Posterior cingulate gyrus (tissue), 11 donors: ENCODE measurements at regions of chr17 and their contacts with region 1.

Region 1: GRCh38 chr17:22123536-22124281 is 431.4 kb downstream of the KCNJ18 start:
- DNase-seq: no peak

Region 2: DNA sequence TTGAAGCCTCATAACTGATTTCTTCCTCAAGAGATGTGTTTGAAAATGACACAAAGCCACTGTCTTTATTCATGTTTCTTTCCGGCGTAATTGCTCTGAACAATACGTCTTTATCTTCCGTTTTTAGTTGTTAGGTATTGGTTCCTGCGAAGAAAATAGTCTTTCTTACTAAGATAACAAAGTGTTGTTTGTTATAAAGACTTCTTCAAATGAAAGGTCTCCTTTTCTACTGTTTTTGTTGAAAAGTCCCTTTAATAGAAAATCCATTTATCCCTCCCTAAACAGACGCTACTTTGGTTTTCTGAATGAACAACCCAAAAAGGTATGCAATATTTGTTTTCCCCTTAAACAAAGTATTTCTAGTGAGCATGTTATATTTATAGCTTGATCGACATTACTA is 37.7 kb after region 1 on chr17:
- intact Hi-C with region 1: loop called (anchors 10 kb)
- DNase-seq: no peak